Activated T-helper 1 cell treated with anti-CD3 and anti-CD28 coated beads, Interleukin-12 subunit alpha, Interleukin-12 subunit beta, Interleukin-2, Interleukin-4 antibody, amounts not matched to agents 30 ng/mL and 10 ng/mL and 1 ng/mL, durations not matched to agents 14 hours and 24 hours and 36 hours (primary cell): ENCODE measurements at regions of chr12 and their contacts with region 1.

Region 1: DNA sequence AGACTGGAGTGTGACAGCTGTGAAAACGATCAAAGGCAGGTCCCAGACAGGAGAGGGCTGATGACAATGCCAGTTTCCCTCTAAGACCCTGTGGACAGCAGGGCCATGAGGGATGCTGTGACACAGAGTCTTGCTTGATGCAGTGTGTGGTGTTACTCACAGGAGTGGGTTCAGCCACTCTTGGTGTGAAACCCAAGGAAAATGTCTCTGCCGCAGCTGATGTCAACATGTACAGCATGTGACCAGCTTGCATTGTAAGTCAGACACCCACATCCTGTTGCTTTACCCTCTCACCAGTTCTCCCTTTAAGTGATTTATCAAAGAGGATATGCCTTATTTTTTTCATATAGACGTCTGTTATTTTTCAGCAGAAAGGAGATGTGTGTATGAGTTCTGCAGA is 268.6 kb downstream of the BTG1 start:
- DNase-seq: peak; percentile 81
- H3K4me3 Mint-ChIP-seq: peak overlapping the region; percentile 66
- H3K27ac Mint-ChIP-seq: peak overlapping the region; percentile 95
- H3K4me1 Mint-ChIP-seq: peaks cover 66% of the 10 kb centered on the region
- H3K27me3 Mint-ChIP-seq: no peaks in the 10 kb centered on the region

Region 2: GRCh38 chr12:91778938-91779400 is 98.1 kb before region 1 on chr12:
- intact Hi-C with region 1: loop called (anchors 1 kb)
- DNase-seq: peak; percentile 12
- H3K4me3 Mint-ChIP-seq: peak overlapping the region; percentile 59
- H3K27ac Mint-ChIP-seq: peak overlapping the region; percentile 11
- H3K4me1 Mint-ChIP-seq: peaks cover 17% of the 10 kb centered on the region
- H3K27me3 Mint-ChIP-seq: peaks cover 3% of the 10 kb centered on the region

Region 3: GRCh38 chr12:91852634-91853033 is 24.4 kb before region 1 on chr12:
- intact Hi-C with region 1: loop called (anchors 1 kb)
- DNase-seq: no peak
- H3K4me3 Mint-ChIP-seq: no peak overlapping the region
- H3K27ac Mint-ChIP-seq: no peak overlapping the region
- H3K4me1 Mint-ChIP-seq: peaks cover 22% of the 10 kb centered on the region
- H3K27me3 Mint-ChIP-seq: peaks cover 6% of the 10 kb centered on the region

Region 4: GRCh38 chr12:92136965-92137721 is 260.1 kb after region 1 on chr12:
- intact Hi-C with region 1: loop called (anchors 1 kb)
- DNase-seq: no peak
- H3K4me3 Mint-ChIP-seq: peak overlapping the region; percentile 94
- H3K27ac Mint-ChIP-seq: peak overlapping the region; percentile 90
- H3K4me1 Mint-ChIP-seq: peaks cover 89% of the 10 kb centered on the region
- H3K27me3 Mint-ChIP-seq: no peaks in the 10 kb centered on the region

Region 5: GRCh38 chr12:92396647-92397252 is 519.7 kb after region 1 on chr12:
- intact Hi-C with region 1: loop called (anchors 2 kb)
- DNase-seq: no peak
- H3K4me3 Mint-ChIP-seq: no peak overlapping the region
- H3K27ac Mint-ChIP-seq: no peak overlapping the region
- H3K4me1 Mint-ChIP-seq: peaks cover 75% of the 10 kb centered on the region
- H3K27me3 Mint-ChIP-seq: no peaks in the 10 kb centered on the region

Region 6: DNA sequence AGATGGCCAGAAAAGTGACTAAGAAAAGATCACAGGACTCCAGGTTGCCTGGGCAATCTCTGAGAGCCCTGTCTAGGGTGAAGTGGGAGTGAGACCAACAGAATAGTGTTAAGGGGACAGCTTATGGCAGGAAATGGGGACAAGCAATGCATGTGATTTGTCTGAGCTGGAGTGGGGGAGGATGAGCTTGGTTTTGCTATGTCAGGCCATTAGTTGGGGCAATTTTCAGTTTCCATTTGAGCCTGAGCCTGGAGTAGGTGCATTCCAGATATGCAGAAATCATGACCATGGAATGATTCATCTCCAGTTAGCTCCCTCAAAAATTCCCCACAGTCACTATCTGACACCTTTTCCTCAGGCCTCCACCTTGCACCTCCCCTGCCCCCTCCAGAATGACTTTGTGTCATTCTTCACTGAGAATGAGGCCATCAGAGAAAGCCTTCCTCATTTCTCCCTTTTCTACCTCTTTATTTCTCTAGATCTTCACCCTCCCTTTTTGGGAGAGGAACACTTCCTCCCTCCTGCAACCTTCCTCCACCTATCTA is 674.9 kb after region 1 on chr12:
- intact Hi-C with region 1: loop called (anchors 5 kb)
- DNase-seq: no peak
- H3K4me3 Mint-ChIP-seq: no peak overlapping the region
- H3K27ac Mint-ChIP-seq: no peak overlapping the region
- H3K4me1 Mint-ChIP-seq: peaks cover 31% of the 10 kb centered on the region
- H3K27me3 Mint-ChIP-seq: no peaks in the 10 kb centered on the region

Region 7: DNA sequence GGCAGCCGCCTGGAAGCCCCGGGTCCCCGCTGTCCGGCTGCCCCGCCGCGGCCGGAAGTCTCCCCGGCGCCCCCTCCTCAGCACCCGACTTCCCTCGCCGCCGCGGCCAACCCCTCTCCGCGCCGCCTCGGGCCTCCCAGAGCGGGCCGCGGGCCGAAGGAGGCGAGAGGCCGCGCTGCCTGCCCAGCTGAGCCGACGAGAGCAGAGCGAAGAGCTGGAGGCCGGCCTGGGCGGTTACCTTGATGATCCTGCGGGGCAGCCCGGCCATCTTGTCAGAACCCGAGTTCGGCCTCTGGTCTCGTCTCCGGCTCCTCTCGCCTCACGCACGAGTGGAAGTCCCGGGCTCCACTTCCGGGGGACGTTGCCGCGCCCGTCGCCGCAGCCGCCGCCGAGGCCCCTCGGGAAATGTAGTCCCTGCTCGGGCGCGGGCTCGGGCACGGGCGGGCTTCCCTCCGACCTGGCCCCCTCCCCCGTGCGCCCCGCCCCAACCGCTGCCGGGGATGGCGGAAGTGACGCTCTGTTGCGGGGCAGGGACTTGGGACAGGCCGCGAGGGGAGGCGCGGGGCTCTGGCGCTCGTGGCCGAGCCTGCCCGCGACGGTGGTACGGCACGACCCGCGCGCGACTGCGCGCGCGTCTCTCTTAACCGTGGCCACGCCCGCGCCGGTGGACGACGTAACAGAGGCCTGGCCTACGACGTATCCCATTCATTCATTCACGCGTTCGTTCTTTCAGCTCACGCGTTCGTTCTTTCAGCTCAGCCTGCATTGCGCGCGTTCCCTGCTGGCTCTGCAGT is 1564.8 kb after region 1 on chr12 and contains the start of gene UBE2N:
- intact Hi-C with region 1: loop called (anchors 10 kb)
- DNase-seq: peak; percentile 95
- H3K4me3 Mint-ChIP-seq: peak within 1 kb of the TSS; percentile 96
- H3K27ac Mint-ChIP-seq: peak within 1 kb of the TSS; percentile 99
- H3K4me1 Mint-ChIP-seq: peaks cover 51% of the 10 kb centered on the region
- H3K27me3 Mint-ChIP-seq: no peaks in the 10 kb centered on the region
- total RNA-seq, gene UBE2N: 231 and 239 TPM in 2 replicates